HCT116 (cell line): ENCODE measurements at regions of chr5 and their contacts with region 1.

Region 1: GRCh38 chr5:132293066-132293991 is 865 bp upstream of the SLC22A4 start:
- DNase-seq: peak; percentile 59
- ATAC-seq: peak; percentile 62
- H3K4me3 ChIP-seq: peak overlapping the region; percentile 59 to 79
- H3K27ac ChIP-seq: peak overlapping the region; percentile 90
- H3K4me1 ChIP-seq: peaks cover 14 to 37% of the 10 kb centered on the region in 2 experiments
- H3K27me3 ChIP-seq: no peaks in the 10 kb centered on the region
- CTCF ChIP-seq: 0 out of 6 replicates have a peak, but pooled peaks of 2 of the 3 experiments have one; percentile 5 to 16
- POLR2A ChIP-seq: peak; percentile 39
- RAD21 ChIP-seq: no peak

Region 2: DNA sequence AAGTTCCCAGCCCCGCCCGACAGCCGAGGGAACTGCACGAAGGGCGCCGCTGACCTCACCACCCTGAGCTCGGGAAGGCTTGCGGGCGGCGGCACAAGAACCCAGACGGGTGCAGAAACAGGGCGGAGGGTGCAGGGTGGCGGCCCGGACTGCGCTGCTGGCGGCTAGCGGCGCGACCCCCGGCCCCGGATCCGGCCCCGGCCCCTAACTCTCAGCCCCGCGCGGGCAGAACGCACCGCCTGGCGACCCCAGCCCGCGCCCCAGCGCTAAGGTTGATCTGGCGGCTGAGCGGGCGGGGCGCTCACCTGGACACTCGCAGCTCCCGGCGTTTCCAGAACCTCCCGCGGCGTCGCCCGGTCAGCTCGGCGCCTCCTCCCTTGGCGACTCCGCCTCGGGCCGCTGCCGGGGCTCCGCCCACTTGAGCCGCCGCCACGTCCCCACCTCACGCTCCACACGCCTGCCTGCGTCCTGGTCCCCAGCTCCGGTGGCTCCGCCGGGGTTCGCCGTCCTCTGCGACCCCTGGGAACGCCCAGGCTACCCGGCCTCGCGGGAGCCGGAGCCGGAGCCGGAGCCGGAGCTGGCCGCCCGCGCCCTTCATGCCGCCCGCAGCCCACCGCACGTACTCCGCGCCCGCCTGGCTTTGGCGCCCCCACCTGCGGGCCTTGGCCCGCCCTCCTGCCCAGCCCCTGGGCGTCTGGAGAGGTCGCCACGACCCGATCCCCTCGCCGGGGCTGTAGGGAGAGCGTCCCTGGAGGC is 65.7 kb before region 1 on chr5 and contains the start of gene P4HA2:
- CTCF ChIA-PET with region 1: no interaction called
- POLR2A ChIA-PET with region 1: interaction called, 4 read pairs
- RAD21 ChIA-PET with region 1: no interaction called
- intact Hi-C with region 1: loop called (anchors 2 kb)
- DNase-seq: peak; percentile 56
- ATAC-seq: peak; percentile 94
- H3K4me3 ChIP-seq: peak within 1 kb of the TSS; percentile 67 to 77
- H3K27ac ChIP-seq: peak within 1 kb of the TSS; percentile 81
- H3K4me1 ChIP-seq: peaks cover 19 to 38% of the 10 kb centered on the region in 2 experiments
- H3K27me3 ChIP-seq: no peaks in the 10 kb centered on the region
- CTCF ChIP-seq: peak in 2 of 3 experiments; percentile 22 to 24; a peak in 2 of 6 replicates
- POLR2A ChIP-seq: peak; percentile 87
- RAD21 ChIP-seq: no peak
- total RNA-seq, gene P4HA2: 29.0 TPM

Region 3: DNA sequence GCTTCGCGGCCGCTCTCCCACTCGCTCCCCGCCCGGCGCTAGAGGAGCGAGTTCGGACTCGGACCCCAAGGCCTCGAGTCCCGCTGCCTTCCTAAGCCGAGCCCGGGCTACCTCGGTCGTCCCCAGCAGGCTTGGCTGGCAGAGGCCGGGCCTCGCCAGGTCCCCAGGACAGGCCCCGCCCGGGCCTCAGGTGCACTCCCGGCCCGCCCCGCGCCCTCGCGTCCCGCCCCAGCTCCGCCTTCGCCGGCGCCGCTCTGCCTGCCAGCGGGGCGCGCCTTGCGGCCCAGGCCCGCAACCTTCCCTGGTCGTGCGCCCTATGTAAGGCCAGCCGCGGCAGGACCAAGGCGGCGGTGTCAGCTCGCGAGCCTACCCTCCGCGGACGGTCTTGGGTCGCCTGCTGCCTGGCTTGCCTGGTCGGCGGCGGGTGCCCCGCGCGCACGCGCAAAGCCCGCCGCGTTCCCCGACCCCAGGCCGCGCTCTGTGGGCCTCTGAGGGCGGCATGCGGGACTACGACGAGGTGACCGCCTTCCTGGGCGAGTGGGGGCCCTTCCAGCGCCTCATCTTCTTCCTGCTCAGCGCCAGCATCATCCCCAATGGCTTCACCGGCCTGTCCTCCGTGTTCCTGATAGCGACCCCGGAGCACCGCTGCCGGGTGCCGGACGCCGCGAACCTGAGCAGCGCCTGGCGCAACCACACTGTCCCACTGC is 76.3 kb after region 1 on chr5 and contains the start of gene SLC22A5:
- CTCF ChIA-PET with region 1: interaction called, 4 read pairs
- POLR2A ChIA-PET with region 1: interaction called, 12 read pairs
- RAD21 ChIA-PET with region 1: no interaction called
- intact Hi-C with region 1: loop called (anchors 5 kb)
- DNase-seq: peak; percentile 42
- ATAC-seq: peak; percentile 94
- H3K4me3 ChIP-seq: peak within 1 kb of the TSS; percentile 71 to 75
- H3K27ac ChIP-seq: peak within 1 kb of the TSS; percentile 83
- H3K4me1 ChIP-seq: peaks cover 16 to 47% of the 10 kb centered on the region in 2 experiments
- H3K27me3 ChIP-seq: no peaks in the 10 kb centered on the region
- CTCF ChIP-seq: no peak
- POLR2A ChIP-seq: peak; percentile 71
- RAD21 ChIP-seq: no peak
- total RNA-seq, gene SLC22A5: 9.9 TPM